OCI-LY7 (cell line): ENCODE measurements at regions of chr19 and their contacts with region 1.

Region 1: DNA sequence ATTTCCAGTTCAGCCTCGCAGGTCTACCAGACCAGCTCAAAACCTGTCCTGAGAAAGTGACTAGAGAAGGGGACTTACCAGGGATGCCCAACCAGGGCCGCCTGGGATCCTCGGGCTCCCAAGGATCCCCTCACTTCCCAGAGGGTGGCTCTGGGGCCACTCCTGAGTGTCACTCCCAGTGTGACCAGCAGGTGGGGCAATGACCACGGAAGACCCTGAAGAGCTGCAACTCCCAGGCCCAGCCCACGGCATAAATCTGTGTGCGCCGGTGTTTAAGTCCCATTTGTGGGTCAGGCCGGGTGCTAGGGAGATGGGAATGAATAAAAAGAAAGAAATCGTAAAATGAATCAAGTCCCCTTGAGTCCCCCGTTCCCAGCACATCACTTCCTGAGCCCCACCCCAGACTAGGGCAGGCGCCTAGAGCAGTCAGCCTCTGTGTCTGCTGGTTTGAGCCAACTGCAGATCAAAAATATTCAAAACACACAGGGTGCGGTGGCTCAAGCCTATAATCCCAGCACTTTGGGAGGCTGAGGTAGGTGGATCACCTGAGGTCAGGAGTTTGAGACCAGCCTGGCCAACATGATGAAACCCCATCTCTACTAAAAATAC is 10.7 kb downstream of the PTGIR start:
- DNase-seq: peak; percentile 84
- H3K4me3 ChIP-seq: no peak overlapping the region
- H3K27ac ChIP-seq: peak overlapping the region; percentile 7
- H3K4me1 ChIP-seq: peaks cover 65% of the 10 kb centered on the region
- CTCF ChIP-seq: peak; percentile 95

Region 2: GRCh38 chr19:46600384-46601317 is 13.6 kb before region 1 on chr19:
- CTCF ChIA-PET with region 1: interaction called, 4 read pairs
- POLR2A ChIA-PET with region 1: interaction called, 16 read pairs
- intact Hi-C with region 1: no loop called
- DNase-seq: peak; percentile 99
- H3K4me3 ChIP-seq: peak overlapping the region; percentile 96
- H3K27ac ChIP-seq: peak overlapping the region; percentile 80
- H3K4me1 ChIP-seq: peaks cover 31% of the 10 kb centered on the region
- CTCF ChIP-seq: no peak

Region 3: GRCh38 chr19:46717034-46717723 is 103.0 kb after region 1 on chr19 and contains the start of gene PRKD2:
- CTCF ChIA-PET with region 1: no interaction called
- POLR2A ChIA-PET with region 1: interaction called, 5 read pairs
- intact Hi-C with region 1: loop called (anchors 1 kb)
- DNase-seq: peak; percentile 85
- H3K4me3 ChIP-seq: peak within 1 kb of the TSS; percentile 92
- H3K27ac ChIP-seq: peak within 1 kb of the TSS; percentile 95
- H3K4me1 ChIP-seq: peaks cover 61% of the 10 kb centered on the region
- CTCF ChIP-seq: no peak
- total RNA-seq, gene PRKD2: 30.5 and 34.3 TPM in 2 replicates

Region 4: DNA sequence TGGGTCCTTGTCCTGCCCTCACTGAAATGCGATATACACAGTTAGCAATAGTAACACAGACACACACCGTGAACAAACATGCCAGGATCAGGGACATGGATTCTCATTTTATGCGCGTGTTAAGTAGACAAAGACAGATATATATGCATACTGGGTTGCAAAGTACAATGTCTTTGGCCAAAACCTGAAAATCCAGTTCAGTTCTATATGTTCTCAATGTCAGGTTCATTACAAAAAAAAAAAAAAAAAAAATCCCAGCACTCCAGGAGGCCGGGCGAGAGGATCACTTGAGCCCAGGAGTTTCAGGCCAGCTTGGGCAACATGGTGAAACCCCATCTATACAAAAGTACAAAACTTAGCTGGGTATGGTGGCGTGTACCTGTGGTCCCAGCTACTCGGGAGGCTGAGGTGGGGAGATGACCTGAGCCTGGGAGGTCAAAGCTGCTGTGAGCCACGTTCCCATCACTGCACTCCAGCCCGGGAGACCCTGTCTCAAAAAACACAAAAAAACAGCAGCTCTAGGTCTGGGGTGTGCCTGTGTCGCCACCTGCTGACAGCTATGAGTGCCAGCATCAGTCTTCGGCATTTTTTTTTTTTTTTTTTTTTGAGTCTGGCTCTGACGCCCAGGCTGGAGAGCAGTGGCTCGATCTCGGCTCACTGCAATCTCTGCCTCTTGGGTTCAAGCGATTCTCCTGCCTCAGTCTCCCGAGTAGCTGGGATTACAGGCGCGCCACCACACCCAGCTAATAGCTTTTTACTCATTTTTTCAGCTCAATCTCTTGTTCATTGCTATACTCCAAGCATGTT is 226.1 kb after region 1 on chr19:
- CTCF ChIA-PET with region 1: no interaction called
- POLR2A ChIA-PET with region 1: interaction called, 10 read pairs
- intact Hi-C with region 1: no loop called
- DNase-seq: peak; percentile 81
- H3K4me3 ChIP-seq: no peak overlapping the region
- H3K27ac ChIP-seq: no peak overlapping the region
- H3K4me1 ChIP-seq: no peaks in the 10 kb centered on the region
- CTCF ChIP-seq: peak; percentile 87